Prostate gland (tissue), 2 donors: ENCODE measurements at regions of chr1 and their contacts with region 1.

Region 1: GRCh38 chr1:46527474-46528296 is 23.8 kb downstream of the KNCN start:
- DNase-seq: peak; percentile 79
- H3K4me3 ChIP-seq: no peak overlapping the region
- H3K27ac ChIP-seq: no peak overlapping the region
- H3K4me1 ChIP-seq: no peaks in the 10 kb centered on the region
- H3K27me3 ChIP-seq: no peaks in the 10 kb centered on the region
- CTCF ChIP-seq: peak; percentile 87 to 96 (median 92)
- POLR2A ChIP-seq: no peak

Region 2: DNA sequence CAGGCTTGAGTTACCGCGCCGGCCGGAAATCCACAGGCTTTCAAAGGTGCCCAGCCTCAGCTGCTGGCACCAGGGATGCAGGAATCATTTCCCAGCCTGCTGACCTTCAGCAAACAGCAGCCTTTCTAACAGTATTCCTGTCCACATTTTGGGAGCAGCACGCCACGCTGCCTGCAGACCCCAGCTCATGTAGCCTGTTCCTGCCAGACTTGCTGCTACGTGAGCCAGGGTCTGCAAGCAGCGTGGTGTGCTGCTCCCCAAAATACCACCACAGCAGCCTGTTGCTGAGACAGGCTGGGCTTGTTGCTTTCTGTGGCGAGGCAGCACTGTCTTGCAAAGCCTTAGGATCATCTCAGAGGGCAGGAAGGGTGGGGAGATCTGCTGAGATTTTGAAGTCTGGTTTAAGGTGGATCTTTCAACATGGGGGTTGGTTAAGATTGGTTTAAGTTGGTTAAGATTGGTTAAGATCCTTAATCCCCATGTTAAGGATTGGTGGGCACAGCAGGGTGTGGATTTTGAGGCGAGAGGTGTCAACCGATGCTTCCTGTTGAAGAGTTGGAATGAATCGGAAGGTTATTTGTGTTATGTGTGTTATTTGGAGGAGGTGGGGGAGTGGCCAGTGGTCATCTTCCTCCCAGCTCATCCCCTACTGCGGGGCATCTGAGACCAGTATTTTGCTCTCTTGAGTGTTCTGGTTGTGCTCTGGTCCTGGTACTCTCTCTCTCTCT is 120.6 kb before region 1 on chr1:
- intact Hi-C with region 1: loop called (anchors 2 kb)
- DNase-seq: no peak
- H3K4me3 ChIP-seq: no peak overlapping the region
- H3K27ac ChIP-seq: no peak overlapping the region
- H3K4me1 ChIP-seq: peaks cover 2% of the 10 kb centered on the region
- H3K27me3 ChIP-seq: no peaks in the 10 kb centered on the region
- CTCF ChIP-seq: no peak
- POLR2A ChIP-seq: no peak

Region 3: GRCh38 chr1:46446646-46447498 is 80.8 kb before region 1 on chr1:
- intact Hi-C with region 1: loop called (anchors 5 kb)
- DNase-seq: peak; percentile 63
- H3K4me3 ChIP-seq: no peak overlapping the region
- H3K27ac ChIP-seq: no peak overlapping the region
- H3K4me1 ChIP-seq: no peaks in the 10 kb centered on the region
- H3K27me3 ChIP-seq: no peaks in the 10 kb centered on the region
- CTCF ChIP-seq: peak; percentile 41 to 74 (median 54)
- POLR2A ChIP-seq: no peak

Region 4: DNA sequence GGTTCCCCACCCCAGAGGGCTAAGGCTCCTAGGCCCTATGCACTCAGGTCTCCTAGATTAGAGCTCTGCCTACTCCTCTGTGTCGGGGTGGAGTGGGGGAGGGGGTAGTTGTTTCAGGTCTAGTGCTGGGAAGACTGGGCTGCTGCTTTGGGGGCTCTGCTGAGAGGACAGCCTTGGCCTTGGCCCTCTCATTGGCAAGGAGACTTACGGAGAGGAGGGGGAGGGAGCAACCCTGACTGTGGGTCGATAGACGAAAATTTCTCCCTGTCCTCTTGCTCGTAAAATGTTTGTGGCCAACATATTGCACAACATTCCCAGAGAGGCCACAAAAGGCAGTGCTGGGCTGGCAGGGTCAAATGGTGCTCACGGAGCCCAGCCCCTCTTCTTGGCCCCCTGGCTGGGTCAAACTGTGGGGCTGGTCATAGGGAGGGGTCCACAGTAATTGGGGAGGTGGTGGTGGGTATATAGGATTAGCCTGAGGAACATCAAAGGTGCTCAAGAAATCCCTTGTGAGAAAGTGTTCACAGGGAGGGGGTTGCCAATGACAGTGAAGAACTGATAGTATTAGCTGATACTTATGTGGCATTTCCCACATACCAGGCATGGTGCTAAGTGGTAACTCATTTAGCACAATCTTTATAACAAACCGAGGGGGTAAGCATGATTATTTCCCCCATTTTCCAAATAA is 46.6 kb before region 1 on chr1:
- intact Hi-C with region 1: loop called (anchors 5 kb)
- DNase-seq: no peak
- H3K4me3 ChIP-seq: no peak overlapping the region
- H3K27ac ChIP-seq: no peak overlapping the region
- H3K4me1 ChIP-seq: no peaks in the 10 kb centered on the region
- H3K27me3 ChIP-seq: peaks cover 8% of the 10 kb centered on the region
- CTCF ChIP-seq: no peak
- POLR2A ChIP-seq: no peak

Region 5: DNA sequence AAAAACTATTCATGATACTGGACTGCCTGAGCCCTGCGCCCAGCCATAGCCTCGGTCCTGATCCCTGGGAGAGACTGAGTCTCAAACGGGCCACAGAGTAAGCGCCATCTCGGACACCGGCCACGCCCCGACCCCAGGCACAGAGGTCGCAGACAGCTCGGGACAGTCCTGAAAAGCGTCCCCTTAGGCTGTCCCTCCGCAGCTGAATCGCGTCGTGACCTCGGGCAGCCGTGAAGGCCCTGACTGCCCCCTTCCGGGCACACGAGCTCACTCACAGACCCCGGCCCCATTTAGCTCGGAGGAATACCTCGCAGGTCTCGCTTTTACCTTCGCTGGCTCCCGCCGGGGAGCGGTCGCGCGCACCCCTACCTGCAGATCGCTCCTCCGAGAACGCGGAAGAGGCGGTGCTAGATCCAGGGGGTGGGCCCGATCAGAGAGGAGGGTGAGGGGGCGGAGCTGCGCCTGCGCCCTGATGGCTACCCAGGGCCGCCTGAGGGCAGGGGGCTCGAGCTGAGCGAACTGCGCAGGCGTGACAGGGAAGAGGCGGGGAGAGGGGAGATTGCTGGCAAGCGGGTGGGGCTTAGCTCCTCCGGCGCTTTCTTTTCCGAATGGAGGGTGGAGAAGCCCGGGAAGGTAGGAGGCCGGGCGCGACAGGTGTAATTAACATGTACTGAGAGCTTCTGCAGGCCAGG is 76.3 kb after region 1 on chr1 and contains the start of gene MKNK1:
- intact Hi-C with region 1: loop called (anchors 5 kb)
- DNase-seq: peak; percentile 97
- H3K4me3 ChIP-seq: peak within 1 kb of the TSS; percentile 81 to 85
- H3K27ac ChIP-seq: peak within 1 kb of the TSS; percentile 75
- H3K4me1 ChIP-seq: peaks cover 6% of the 10 kb centered on the region
- H3K27me3 ChIP-seq: no peaks in the 10 kb centered on the region
- CTCF ChIP-seq: peak in 1 of 4 experiments; percentile 33
- POLR2A ChIP-seq: peak; percentile 98
- total RNA-seq, gene MKNK1: 28.1 to 37.8 TPM

Region 6: DNA sequence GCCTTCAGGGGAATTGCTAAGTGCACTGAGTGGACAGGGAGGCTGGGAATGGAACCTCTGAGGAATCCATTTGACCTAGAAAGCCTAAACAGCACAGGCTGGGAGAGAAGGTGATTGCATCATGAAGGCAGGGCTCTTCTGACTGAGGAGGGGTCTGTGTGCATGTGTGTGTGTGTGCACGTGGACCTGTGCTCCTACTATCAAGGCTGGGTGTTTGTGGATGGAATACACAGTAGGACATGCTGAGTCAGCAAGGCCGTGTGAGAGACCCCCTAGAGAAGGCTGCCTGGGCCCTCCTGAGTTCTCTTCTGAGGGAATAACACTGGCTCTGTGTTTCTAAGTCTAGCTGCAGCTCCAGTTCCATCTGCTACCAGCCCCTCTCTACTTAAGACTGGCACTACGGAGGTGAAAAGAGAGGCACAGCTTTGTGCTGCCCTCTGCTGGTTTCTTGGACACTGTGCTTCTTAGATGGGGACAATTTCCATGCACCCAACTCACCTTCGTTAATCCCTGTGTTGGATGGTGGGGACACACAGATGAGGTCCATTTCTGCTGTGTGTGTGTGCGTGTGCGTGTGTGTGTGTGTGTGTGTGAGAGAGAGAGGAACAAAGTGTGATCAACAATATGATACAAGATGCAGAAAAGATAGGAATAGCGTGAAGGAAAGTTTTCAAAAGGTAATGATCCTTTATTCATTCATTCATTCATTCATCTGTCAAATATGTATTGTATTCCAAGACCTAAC is 197.5 kb after region 1 on chr1:
- intact Hi-C with region 1: loop called (anchors 2 kb)
- DNase-seq: peak; percentile 79
- H3K4me3 ChIP-seq: no peak overlapping the region
- H3K27ac ChIP-seq: no peak overlapping the region
- H3K4me1 ChIP-seq: no peaks in the 10 kb centered on the region
- H3K27me3 ChIP-seq: no peaks in the 10 kb centered on the region
- CTCF ChIP-seq: peak; percentile 42 to 89 (median 80)
- POLR2A ChIP-seq: no peak